Heart right ventricle (tissue), 16 donors: ENCODE measurements at regions of chr3 and their contacts with region 1.

Region 1: DNA sequence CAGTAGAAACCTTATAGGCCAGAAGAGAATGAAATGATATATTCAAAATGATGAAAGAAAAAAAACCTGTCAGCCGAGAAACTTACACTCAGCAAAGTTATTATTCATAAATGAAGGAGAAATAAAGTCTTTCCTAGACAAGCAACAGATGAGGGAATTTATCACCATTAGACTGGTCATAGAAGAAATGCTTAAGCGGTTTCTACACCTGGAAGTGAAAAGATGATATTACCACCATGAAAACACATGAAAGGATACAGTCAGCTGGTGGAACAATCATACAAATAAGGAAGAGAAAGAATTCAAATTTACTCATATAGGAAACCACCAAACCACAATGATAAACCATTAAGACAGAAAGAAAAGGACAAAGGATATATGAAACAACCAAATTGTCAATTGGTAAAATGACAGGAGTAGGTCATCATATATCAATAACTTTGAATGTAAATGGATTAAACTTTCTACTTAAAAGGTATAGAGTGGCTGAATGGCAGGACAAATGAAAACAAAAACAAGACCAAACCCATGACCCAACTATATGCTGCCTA is 29.9 kb upstream of the PRR23C start:
- DNase-seq: no peak
- ATAC-seq: no peak
- H3K4me3 ChIP-seq: no peak overlapping the region
- H3K27ac ChIP-seq: no peak overlapping the region
- H3K4me1 ChIP-seq: no peaks in the 10 kb centered on the region
- H3K27me3 ChIP-seq: peaks cover 0 to 15% (median 0%) of the 10 kb centered on the region in 7 donors
- CTCF ChIP-seq: no peak

Region 2: DNA sequence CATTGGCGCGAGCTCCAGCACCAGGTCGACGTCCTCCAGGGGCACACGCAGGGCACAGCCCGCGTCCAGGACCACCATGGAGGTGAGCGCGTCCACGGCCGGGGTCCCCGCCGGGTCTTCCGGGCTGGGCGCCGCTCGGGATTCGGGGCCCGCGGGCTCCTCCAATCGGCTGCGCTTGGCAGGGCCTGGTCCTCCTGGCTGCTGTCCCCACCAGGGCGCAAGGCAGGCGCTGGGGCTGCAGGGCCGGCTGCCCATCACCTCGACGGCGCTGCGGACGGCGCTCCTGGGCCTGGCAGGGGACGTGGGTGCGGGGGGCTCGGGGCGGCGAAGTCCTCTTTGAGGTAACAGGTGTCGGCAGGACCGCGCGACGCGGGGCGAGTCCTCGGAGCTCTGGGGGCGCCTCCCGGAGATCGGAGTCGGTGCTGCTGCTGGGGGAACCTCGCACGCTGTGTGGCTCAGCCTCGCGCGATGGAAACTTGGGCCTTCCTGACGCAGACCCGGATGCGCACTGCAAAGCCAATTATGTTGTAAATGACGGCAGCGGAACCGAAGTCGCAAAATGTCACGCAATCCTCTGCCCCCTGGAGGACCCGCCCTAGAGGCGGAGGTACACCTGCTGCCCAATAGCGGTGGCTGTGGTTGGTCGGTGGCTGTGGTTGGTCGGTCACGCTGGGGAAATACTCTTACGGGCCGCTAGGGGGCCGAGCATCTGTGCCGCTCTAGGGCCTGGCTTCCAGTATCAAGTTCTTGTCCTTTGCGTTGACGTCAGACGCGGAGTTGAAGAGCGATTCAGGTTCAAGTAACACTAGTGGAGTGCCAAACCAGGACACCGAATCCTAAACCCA is 30.1 kb before region 1 on chr3 and contains the start of gene PRR23C:
- intact Hi-C with region 1: loop called in 1 of 10 experiments (anchors 2 kb)
- DNase-seq: no peak
- ATAC-seq: no peak
- H3K4me3 ChIP-seq: no peak within 1 kb of the TSS
- H3K27ac ChIP-seq: no peak within 1 kb of the TSS
- H3K4me1 ChIP-seq: no peaks in the 10 kb centered on the region
- H3K27me3 ChIP-seq: peaks cover 0 to 32% (median 16%) of the 10 kb centered on the region in 7 donors
- CTCF ChIP-seq: no peak
- total RNA-seq, gene PRR23C: not detected